ENCODE measurements at regions of chr2 and their contacts with region 1.

Region 1: GRCh38 chr2:65064728-65065552 is 8.7 kb downstream of the CEP68 start:
- DNase-seq: peak; percentile 76
- CTCF ChIP-seq: peak; percentile 92

Region 2: GRCh38 chr2:65240657-65241056 is 175.7 kb after region 1 on chr2:
- in situ Hi-C with region 1: no loop called
- DNase-seq: no peak
- CTCF ChIP-seq: no peak

Region 3: GRCh38 chr2:65566620-65567019 is 501.7 kb after region 1 on chr2:
- in situ Hi-C with region 1: loop called (anchors 10 kb)
- DNase-seq: no peak
- CTCF ChIP-seq: no peak

Measured in GM13977 (cell line).